ENCODE measurements at regions of chr7 and their contacts with region 1.

Region 1: DNA sequence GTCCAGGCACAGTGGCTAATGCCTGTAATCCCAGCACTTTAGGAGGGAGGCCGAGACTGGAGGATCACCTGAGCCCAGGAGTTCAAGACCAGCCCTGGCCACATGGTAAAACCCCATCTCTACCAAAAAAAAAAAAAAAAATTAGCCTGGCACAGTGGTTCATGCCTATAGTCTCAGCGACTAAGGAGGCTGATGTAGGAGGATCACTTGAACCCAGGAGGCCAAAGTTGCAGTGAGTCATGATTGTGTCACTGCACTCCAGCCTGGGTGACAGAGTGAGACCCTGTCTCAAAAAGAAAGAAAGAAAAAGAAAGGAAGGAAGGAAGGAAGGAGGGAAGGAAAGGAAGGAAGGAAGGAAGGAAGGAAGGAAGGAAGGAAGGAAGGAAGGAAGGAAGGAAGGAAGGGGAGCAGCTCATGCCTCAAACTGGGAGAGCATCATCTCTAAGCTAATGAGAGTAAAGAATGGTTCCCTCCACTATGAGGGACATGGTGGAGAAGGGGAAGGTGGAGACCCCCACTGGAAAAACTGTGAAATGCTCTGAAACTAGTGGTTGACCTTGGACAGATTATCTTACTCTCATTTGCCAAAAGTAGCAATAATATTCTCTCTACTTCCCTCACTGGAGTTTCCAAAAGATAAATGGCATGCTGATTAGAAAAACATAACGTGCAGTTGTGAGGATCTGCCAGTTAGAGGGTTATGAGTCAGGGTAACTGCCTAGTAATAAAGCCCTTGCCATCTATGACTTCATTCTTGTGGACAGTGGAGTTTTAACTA is 16.8 kb downstream of the GIMAP5 start:
- DNase-seq: peak in 3 of 14 experiments; percentile 58 to 71 (median 68)
- ATAC-seq: peak; percentile 10
- H3K4me3 ChIP-seq: no peak overlapping the region
- H3K4me3 Mint-ChIP-seq: peak overlapping the region; percentile 57
- H3K27ac ChIP-seq: peak overlapping the region; percentile 66 to 72
- H3K27ac Mint-ChIP-seq: peak overlapping the region; percentile 99
- H3K4me1 ChIP-seq: peaks cover 66% of the 10 kb centered on the region
- H3K4me1 Mint-ChIP-seq: peaks cover 80% of the 10 kb centered on the region
- H3K27me3 ChIP-seq: no peaks in the 10 kb centered on the region
- H3K27me3 Mint-ChIP-seq: peaks cover 5% of the 10 kb centered on the region
- CTCF ChIP-seq: peak; percentile 38

Region 2: GRCh38 chr7:150404805-150405583 is 349.0 kb before region 1 on chr7:
- CTCF ChIA-PET with region 1: interaction called, 4 read pairs
- POLR2A ChIA-PET with region 1: interaction called, 12 read pairs
- intact Hi-C with region 1: no loop called
- DNase-seq: peak; percentile 56 to 92 (median 72)
- ATAC-seq: peak; percentile 82
- H3K4me3 ChIP-seq: peak overlapping the region; percentile 90
- H3K4me3 Mint-ChIP-seq: peak overlapping the region; percentile 94
- H3K27ac ChIP-seq: peak overlapping the region; percentile 88 to 89
- H3K27ac Mint-ChIP-seq: peak overlapping the region; percentile 82
- H3K4me1 ChIP-seq: peaks cover 34% of the 10 kb centered on the region
- H3K4me1 Mint-ChIP-seq: peaks cover 37% of the 10 kb centered on the region
- H3K27me3 ChIP-seq: no peaks in the 10 kb centered on the region
- H3K27me3 Mint-ChIP-seq: no peaks in the 10 kb centered on the region
- CTCF ChIP-seq: no peak

Region 3: DNA sequence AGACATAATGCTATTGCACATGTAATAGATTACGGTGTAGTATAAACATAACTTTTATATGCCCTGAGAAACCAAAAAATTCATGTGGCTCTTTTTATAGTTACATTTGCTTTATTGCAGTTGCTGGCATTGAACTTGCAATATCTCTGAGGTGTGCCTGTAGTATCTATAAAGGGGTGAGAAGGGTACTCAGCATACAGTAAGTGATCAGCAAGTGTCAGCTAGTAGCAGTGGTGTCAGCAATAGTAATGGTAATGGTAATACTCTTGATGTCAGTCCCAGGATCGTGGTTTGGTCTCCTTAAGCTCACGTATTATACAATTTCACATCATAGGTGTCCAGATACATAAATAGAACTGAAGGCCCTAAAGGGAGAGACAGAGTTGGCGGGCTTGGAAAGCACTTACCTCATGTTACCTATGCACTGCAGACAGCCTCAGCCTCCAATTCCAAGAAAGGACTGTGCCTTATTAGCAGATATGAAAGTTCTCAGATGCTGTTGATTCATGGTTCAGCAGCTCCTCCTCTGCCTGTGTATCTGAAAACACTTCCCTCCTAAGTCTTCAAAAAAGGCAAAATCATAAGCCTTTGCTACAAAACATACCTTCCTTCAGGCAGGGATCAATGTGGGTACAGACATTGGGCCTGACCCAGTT is 245.9 kb before region 1 on chr7:
- CTCF ChIA-PET with region 1: no interaction called
- POLR2A ChIA-PET with region 1: interaction called, 14 read pairs
- intact Hi-C with region 1: no loop called
- DNase-seq: peak in 5 of 14 experiments; percentile 46 to 54 (median 49)
- ATAC-seq: peak; percentile 43
- H3K4me3 ChIP-seq: peak overlapping the region; percentile 38
- H3K4me3 Mint-ChIP-seq: peak overlapping the region; percentile 84
- H3K27ac ChIP-seq: peak overlapping the region; percentile 3 to 71
- H3K27ac Mint-ChIP-seq: peak overlapping the region; percentile 93
- H3K4me1 ChIP-seq: peaks cover 77% of the 10 kb centered on the region
- H3K4me1 Mint-ChIP-seq: peaks cover 95% of the 10 kb centered on the region
- H3K27me3 ChIP-seq: no peaks in the 10 kb centered on the region
- H3K27me3 Mint-ChIP-seq: no peaks in the 10 kb centered on the region
- CTCF ChIP-seq: no peak

Region 4: GRCh38 chr7:150567169-150567568 is 186.8 kb before region 1 on chr7 and contains the start of gene GIMAP4:
- CTCF ChIA-PET with region 1: interaction called, 20 read pairs
- POLR2A ChIA-PET with region 1: interaction called, 67 read pairs
- intact Hi-C with region 1: loop called (anchors 1 kb)
- DNase-seq: peak in 10 of 14 experiments; percentile 27 to 71 (median 46)
- ATAC-seq: peak; percentile 45
- H3K4me3 ChIP-seq: peak within 1 kb of the TSS; percentile 72
- H3K4me3 Mint-ChIP-seq: peak within 1 kb of the TSS; percentile 98
- H3K27ac ChIP-seq: peak within 1 kb of the TSS; percentile 60 to 81
- H3K27ac Mint-ChIP-seq: peak within 1 kb of the TSS; percentile 88
- H3K4me1 ChIP-seq: peaks cover 68% of the 10 kb centered on the region
- H3K4me1 Mint-ChIP-seq: peaks cover 84% of the 10 kb centered on the region
- H3K27me3 ChIP-seq: no peaks in the 10 kb centered on the region
- H3K27me3 Mint-ChIP-seq: no peaks in the 10 kb centered on the region
- CTCF ChIP-seq: no peak
- total RNA-seq, gene GIMAP4: 20.7 to 23.6 TPM

Region 5: DNA sequence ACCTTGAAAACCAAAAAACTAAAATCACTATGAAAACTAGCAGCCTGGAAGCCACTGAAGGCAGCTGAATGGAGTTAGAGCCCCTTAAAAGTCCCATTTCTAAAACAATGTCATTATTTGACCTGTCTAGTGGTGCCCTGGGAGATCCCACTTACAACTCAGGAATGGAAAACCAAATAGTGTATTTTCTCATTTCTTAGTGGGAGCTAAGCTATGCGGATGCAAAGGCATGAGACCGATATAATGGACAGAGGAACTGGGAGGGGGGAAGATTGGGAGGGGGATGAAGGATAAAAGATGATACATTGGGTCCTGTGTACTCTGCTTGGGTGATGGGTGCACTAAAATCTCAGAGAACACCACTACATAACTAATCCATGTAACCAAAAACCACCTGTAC is 78.3 kb before region 1 on chr7:
- CTCF ChIA-PET with region 1: no interaction called
- POLR2A ChIA-PET with region 1: interaction called, 25 read pairs
- intact Hi-C with region 1: loop called in 1 of 2 experiments (anchors 2 kb)
- DNase-seq: no peak
- ATAC-seq: no peak
- H3K4me3 ChIP-seq: peak overlapping the region; percentile 8
- H3K4me3 Mint-ChIP-seq: peak overlapping the region; percentile 78
- H3K27ac ChIP-seq: peak overlapping the region; percentile 58 to 78
- H3K27ac Mint-ChIP-seq: peak overlapping the region; percentile 79
- H3K4me1 ChIP-seq: peaks cover 40% of the 10 kb centered on the region
- H3K4me1 Mint-ChIP-seq: peaks cover 87% of the 10 kb centered on the region
- H3K27me3 ChIP-seq: no peaks in the 10 kb centered on the region
- H3K27me3 Mint-ChIP-seq: no peaks in the 10 kb centered on the region
- CTCF ChIP-seq: no peak

Region 6: DNA sequence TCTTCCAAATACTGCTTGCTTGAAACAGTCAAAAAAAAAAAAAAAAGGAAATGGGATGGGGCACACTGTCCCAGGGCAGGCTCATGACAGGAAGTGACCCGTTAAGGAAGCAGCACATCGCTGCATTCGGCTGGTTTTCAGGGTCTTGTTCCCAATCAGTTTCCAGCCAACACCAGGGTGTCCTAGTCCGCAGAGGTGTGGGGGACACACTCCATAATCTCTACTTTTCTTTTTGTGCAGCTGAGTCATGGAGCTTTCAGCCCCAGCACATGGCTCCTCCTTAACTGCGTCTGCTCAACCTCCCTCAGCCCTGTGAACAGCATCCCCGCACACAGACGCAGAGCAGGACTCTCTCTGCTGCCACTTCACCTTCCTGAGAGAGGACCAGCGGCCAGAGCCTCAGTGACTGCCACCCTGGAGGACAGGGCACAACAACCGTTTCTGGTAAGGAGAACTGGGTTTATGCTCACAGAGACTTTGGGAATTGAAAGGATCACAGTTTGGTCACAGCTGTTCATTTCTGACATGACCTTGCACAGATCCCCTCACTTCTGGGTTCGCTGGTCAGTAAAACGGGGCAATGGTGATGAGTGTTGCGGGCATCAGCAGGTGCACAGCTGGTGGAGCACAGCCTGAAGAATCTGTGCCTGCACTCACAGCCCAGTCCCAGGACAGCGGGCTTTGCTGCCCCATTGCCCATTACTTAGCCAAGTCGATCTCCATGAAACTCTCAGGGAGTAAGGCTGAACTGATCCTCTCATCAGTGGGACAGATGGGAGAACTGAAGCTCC is 16.6 kb before region 1 on chr7 and contains the start of gene GIMAP5:
- CTCF ChIA-PET with region 1: interaction called, 12 read pairs
- POLR2A ChIA-PET with region 1: interaction called, 120 read pairs
- intact Hi-C with region 1: loop called in 1 of 2 experiments (anchors 2 kb)
- DNase-seq: peak in 12 of 14 experiments; percentile 29 to 78 (median 70)
- ATAC-seq: peak; percentile 75
- H3K4me3 ChIP-seq: peak within 1 kb of the TSS; percentile 65
- H3K4me3 Mint-ChIP-seq: peak within 1 kb of the TSS; percentile 96
- H3K27ac ChIP-seq: peak within 1 kb of the TSS; percentile 80 to 87
- H3K27ac Mint-ChIP-seq: peak within 1 kb of the TSS; percentile 87
- H3K4me1 ChIP-seq: peaks cover 59% of the 10 kb centered on the region
- H3K4me1 Mint-ChIP-seq: peaks cover 74% of the 10 kb centered on the region
- H3K27me3 ChIP-seq: no peaks in the 10 kb centered on the region
- H3K27me3 Mint-ChIP-seq: no peaks in the 10 kb centered on the region
- CTCF ChIP-seq: no peak
- total RNA-seq, gene GIMAP5: 31.3 to 35.2 TPM